T-cell (primary cell): ENCODE measurements at regions of chr17 and their contacts with region 1.

Region 1: DNA sequence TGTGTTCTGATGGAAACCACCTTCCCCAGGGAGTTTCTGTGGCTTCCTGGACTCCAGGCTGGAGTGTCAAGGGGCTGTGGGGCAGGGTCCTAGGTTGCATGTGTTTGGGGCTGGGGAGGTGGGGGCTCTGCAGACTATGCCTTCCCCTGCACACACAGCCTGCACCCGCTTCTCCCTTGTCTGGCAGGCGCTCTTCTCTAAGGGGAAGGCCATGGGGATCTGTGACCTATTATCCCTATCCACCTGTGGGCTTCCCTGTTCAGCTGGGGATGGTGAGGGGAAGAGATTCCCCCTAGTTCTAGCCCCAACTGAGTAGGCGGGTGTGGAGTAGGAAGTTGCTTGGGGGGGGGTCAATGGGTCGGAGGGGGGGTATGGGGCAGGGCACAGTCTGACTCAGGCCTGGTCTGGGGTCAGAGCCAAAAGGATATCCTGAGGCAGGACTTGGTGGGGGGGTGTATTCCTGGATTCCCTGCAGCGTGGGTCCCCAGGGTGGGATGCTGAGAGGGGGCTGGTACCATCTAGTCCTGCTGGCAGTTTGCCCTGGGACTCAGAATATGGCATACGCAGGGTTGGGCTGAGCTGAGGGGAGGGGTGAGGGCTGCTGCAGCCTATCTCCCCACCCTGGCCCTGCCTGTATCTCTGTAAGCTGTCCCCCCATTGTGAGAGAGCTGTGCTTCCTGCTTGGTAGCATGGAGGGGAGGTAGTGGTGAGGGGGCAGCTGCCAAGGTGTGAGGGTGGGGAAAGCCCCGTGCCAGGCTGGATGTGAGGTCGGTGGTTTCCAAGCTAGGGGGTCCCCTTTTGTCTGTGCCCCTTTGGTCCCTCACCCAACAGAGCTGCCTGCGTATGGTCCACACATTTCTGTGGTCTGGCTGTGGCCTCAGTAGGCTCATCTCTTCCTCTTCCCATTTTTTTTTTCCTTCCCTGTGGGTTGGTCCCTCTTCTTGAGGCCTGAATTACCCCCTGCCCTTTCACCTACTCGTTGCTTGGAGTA is 14.7 kb downstream of the RARA start:
- DNase-seq: peak in 34 of 35 experiments; percentile 37 to 94 (median 83)
- ATAC-seq: peak; percentile 2 to 56 (median 3)
- H3K4me3 ChIP-seq: peak overlapping the region; percentile 83 to 99
- H3K4me3 Mint-ChIP-seq: peak overlapping the region; percentile 91 to 96 (median 94)
- H3K27ac ChIP-seq: peak overlapping the region; percentile 99
- H3K27ac Mint-ChIP-seq: peak overlapping the region; percentile 99 to 100
- H3K4me1 ChIP-seq: peaks cover 57 to 98% of the 10 kb centered on the region in 2 experiments
- H3K4me1 Mint-ChIP-seq: peaks cover 89 to 97% (median 94%) of the 10 kb centered on the region in 3 donors
- H3K27me3 ChIP-seq: no peaks in the 10 kb centered on the region
- H3K27me3 Mint-ChIP-seq: no peaks in the 10 kb centered on the region

Region 2: GRCh38 chr17:40340880-40341807 is 17.5 kb after region 1 on chr17:
- CTCF ChIA-PET with region 1: interaction called in 1 of 2 experiments, 6 read pairs
- POLR2A ChIA-PET with region 1: interaction called, 4 to 20 read pairs
- DNase-seq: peak; percentile 61 to 94 (median 88)
- ATAC-seq: peak; percentile 79 to 82 (median 81)
- H3K4me3 ChIP-seq: peak overlapping the region; percentile 67 to 72
- H3K4me3 Mint-ChIP-seq: peak overlapping the region; percentile 74 to 82 (median 77)
- H3K27ac ChIP-seq: peak overlapping the region; percentile 84
- H3K27ac Mint-ChIP-seq: peak overlapping the region; percentile 86 to 92
- H3K4me1 ChIP-seq: peaks cover 65 to 89% of the 10 kb centered on the region in 2 experiments
- H3K4me1 Mint-ChIP-seq: peaks cover 74 to 80% (median 78%) of the 10 kb centered on the region in 3 donors
- H3K27me3 ChIP-seq: no peaks in the 10 kb centered on the region
- H3K27me3 Mint-ChIP-seq: no peaks in the 10 kb centered on the region

Region 3: DNA sequence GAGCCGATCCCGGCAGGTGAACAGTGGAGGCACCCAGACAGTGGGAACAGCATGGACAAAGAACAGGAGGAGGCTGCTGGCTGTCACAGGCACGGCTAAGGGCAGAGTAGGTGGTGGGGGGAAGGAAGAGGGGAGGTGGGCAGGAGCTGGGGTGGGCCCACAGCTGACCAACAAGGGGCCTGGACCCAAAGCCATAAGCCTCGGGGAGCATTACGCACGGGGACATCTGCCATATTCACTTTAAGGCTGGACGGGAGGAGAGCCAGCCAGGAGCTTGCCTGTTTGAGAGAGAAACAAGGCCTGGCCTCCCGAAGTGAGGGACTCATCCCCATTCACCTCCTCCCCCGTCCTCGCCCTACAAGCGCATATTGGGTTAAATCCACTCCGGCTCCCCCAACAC is 1430.4 kb after region 1 on chr17:
- CTCF ChIA-PET with region 1: no interaction called
- POLR2A ChIA-PET with region 1: interaction called in 1 of 2 experiments, 12 read pairs
- DNase-seq: no peak
- ATAC-seq: no peak
- H3K4me3 ChIP-seq: no peak overlapping the region
- H3K4me3 Mint-ChIP-seq: no peak overlapping the region
- H3K27ac ChIP-seq: no peak overlapping the region
- H3K27ac Mint-ChIP-seq: no peak overlapping the region
- H3K4me1 ChIP-seq: no peaks in the 10 kb centered on the region
- H3K4me1 Mint-ChIP-seq: no peaks in the 10 kb centered on the region
- H3K27me3 ChIP-seq: peaks cover 0 to 28% of the 10 kb centered on the region in 2 experiments
- H3K27me3 Mint-ChIP-seq: no peaks in the 10 kb centered on the region